ENCODE measurements at regions of chr2 and their contacts with region 1.

Region 1: DNA sequence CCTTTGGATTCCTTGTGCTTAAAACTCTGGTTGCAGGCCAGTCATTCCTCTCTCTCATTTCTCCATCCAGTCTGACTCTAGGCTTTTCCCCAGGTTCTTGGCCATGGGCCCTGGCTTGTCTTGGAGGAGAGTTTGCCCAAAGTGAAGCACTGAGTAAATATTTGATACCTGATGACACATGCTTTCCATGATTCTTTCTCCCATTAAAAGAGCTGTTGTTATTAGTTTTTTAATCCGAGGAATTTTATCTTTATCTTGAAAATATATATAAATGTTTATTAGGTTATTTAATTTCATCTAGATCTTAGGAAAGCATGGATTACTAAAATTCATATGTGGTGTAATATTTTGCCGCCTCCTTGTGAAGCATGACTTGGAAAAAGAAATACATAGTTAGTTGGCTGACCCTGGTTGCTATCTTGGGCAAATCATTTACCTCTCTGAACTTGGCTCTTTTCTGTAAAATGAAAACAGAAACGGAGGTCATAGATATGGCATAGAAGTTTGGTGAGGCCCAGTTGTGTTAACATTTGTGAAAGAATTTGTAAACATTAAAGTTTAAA is 650.1 kb downstream of the SLC4A3 start:
- DNase-seq: peak; percentile 97
- ATAC-seq: peak; percentile 67
- H3K4me3 ChIP-seq: no peak overlapping the region
- H3K27ac ChIP-seq: peak overlapping the region; percentile 96
- H3K4me1 ChIP-seq: peaks cover 94% of the 10 kb centered on the region
- H3K27me3 ChIP-seq: no peaks in the 10 kb centered on the region
- CTCF ChIP-seq: no peak

Region 2: DNA sequence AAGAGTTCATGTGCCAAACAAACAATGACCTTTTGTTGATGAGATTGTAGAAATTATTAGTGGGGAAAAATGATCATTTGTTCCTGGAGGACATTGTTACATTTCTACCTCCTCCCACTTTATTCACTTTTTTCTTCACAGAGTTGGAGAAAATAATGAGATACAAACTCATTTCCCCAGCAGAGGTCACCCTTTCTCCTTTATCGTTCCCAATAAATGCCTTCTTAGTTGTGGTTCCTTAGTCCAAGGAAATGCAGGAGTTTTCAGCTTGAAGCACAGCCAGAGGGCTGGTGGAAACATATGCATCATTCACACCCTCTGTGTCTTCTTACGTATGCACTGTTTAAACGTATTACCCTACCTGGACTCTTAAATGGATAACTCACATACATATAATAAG is 541.3 kb before region 1 on chr2:
- CTCF ChIA-PET with region 1: no interaction called
- POLR2A ChIA-PET with region 1: no interaction called
- intact Hi-C with region 1: loop called (anchors 5 kb)
- DNase-seq: peak; percentile 86
- ATAC-seq: peak; percentile 74
- H3K4me3 ChIP-seq: no peak overlapping the region
- H3K27ac ChIP-seq: no peak overlapping the region
- H3K4me1 ChIP-seq: no peaks in the 10 kb centered on the region
- H3K27me3 ChIP-seq: no peaks in the 10 kb centered on the region
- CTCF ChIP-seq: peak; percentile 78

Region 3: DNA sequence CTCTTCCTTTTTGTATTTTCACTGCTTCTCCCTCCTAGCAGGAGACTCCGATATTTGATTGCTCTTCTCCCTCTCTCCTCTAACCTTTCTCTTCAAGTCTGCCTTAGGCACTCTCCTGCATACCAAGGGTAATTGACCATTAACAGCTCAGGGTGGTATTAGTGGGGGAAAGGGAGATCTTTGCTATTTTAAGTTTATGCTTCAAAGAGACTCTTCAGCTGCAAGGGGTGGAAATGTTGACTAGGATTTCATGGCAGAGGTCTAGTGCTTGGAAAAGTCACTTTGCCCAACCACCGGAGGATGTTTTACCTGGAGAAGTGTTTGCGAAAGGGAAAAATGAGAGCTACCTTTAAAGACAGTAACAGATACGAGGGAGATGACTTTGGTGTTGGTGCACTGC is 196.4 kb before region 1 on chr2:
- CTCF ChIA-PET with region 1: no interaction called
- POLR2A ChIA-PET with region 1: no interaction called
- intact Hi-C with region 1: loop called (anchors 10 kb)
- DNase-seq: no peak
- ATAC-seq: no peak
- H3K4me3 ChIP-seq: no peak overlapping the region
- H3K27ac ChIP-seq: no peak overlapping the region
- H3K4me1 ChIP-seq: no peaks in the 10 kb centered on the region
- H3K27me3 ChIP-seq: no peaks in the 10 kb centered on the region
- CTCF ChIP-seq: no peak

Region 4: GRCh38 chr2:220192994-220193753 is 84.4 kb before region 1 on chr2:
- CTCF ChIA-PET with region 1: no interaction called
- POLR2A ChIA-PET with region 1: no interaction called
- intact Hi-C with region 1: loop called (anchors 2 kb)
- DNase-seq: peak; percentile 98
- ATAC-seq: peak; percentile 86
- H3K4me3 ChIP-seq: no peak overlapping the region
- H3K27ac ChIP-seq: peak overlapping the region; percentile 96
- H3K4me1 ChIP-seq: peaks cover 41% of the 10 kb centered on the region
- H3K27me3 ChIP-seq: no peaks in the 10 kb centered on the region
- CTCF ChIP-seq: peak; percentile 51

Region 5: DNA sequence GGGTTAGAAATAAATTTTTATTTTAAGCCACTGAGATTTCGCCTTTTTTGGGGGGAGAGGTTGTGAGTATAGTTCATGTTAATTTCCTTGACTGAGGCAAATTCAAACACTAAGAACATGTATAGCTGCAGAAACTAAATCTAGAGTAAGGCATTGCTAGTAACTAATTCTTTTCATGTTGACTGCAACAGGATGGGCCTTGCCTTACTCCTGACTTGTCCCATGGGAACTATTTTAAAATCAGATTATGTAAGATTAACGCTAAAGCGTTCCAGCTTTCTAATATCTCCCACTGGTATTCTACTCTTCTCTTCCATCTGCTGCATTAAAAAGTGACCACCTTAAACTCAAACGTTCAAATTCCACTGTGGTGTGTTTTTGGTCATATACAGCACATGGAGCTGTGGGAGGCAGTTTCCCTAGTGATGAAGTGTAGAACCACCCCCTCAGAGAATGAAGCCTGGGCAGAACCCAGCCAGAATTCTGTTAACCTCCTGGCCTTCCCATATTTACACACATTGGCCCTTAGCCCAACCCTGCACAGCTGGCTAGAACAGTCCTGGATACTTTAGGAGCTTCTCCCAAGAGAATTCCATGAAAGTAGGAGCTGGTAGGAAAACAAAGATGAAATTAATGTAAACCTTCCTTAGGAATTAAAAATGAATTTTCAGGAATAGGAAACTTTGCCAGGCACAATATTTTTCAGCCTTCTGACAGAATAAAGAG is 37.7 kb after region 1 on chr2:
- CTCF ChIA-PET with region 1: no interaction called
- POLR2A ChIA-PET with region 1: no interaction called
- intact Hi-C with region 1: loop called (anchors 2 kb)
- DNase-seq: no peak
- ATAC-seq: no peak
- H3K4me3 ChIP-seq: no peak overlapping the region
- H3K27ac ChIP-seq: no peak overlapping the region
- H3K4me1 ChIP-seq: peaks cover 28% of the 10 kb centered on the region
- H3K27me3 ChIP-seq: no peaks in the 10 kb centered on the region
- CTCF ChIP-seq: no peak

Region 6: DNA sequence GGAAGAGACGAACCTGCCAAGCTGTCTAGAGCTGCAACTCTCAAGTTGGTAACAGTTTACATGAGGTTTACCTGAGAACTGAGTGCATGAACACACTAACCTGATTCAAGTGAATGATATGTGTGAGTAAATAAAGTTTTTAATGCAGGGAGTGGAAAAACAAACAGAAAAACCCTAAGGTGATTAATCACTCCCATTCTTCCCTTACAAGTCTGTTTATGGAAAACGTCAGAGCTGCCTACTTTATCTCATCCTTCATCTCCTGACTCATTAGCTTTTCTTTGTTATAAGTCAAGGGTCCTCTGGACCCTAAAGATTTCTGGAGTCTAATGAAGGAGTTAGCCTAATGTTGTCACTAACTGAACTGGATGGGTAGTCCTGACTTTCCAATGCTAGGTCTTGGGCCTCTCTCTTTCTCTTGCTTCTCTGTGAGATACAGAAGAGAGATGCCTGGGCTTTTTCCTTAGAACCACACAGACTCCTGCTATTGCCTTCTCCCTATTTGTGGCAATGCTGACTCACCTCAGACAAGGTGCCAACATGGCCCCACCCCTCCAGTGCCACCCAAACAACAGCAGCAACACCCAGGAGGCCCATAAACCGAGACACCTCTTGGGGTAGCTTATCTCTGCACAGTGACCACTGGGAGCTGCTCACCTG is 342.2 kb after region 1 on chr2:
- CTCF ChIA-PET with region 1: no interaction called
- POLR2A ChIA-PET with region 1: no interaction called
- intact Hi-C with region 1: loop called (anchors 1 kb)
- DNase-seq: peak; percentile 96
- ATAC-seq: peak; percentile 90
- H3K4me3 ChIP-seq: peak overlapping the region; percentile 34; the same call in 1 of the 2 replicates
- H3K27ac ChIP-seq: peak overlapping the region; percentile 99
- H3K4me1 ChIP-seq: peaks cover 31% of the 10 kb centered on the region
- H3K27me3 ChIP-seq: no peaks in the 10 kb centered on the region
- CTCF ChIP-seq: no peak

Region 7: GRCh38 chr2:220648628-220649027 is 371.1 kb after region 1 on chr2:
- CTCF ChIA-PET with region 1: no interaction called
- POLR2A ChIA-PET with region 1: no interaction called
- intact Hi-C with region 1: no loop called
- DNase-seq: peak; percentile 14
- ATAC-seq: no peak
- H3K4me3 ChIP-seq: no peak overlapping the region
- H3K27ac ChIP-seq: no peak overlapping the region
- H3K4me1 ChIP-seq: no peaks in the 10 kb centered on the region
- H3K27me3 ChIP-seq: no peaks in the 10 kb centered on the region
- CTCF ChIP-seq: no peak